T-cell (primary cell): ENCODE measurements at regions of chr10 and their contacts with region 1.

Region 1: GRCh38 chr10:5476918-5477525 is 22.3 kb downstream of the CALML5 start:
- DNase-seq: no peak
- ATAC-seq: no peak
- H3K4me3 ChIP-seq: no peak overlapping the region
- H3K4me3 Mint-ChIP-seq: no peak overlapping the region
- H3K27ac ChIP-seq: no peak overlapping the region
- H3K27ac Mint-ChIP-seq: no peak overlapping the region
- H3K4me1 ChIP-seq: no peaks in the 10 kb centered on the region
- H3K4me1 Mint-ChIP-seq: no peaks in the 10 kb centered on the region
- H3K27me3 ChIP-seq: peaks cover 0 to 16% of the 10 kb centered on the region in 2 experiments
- H3K27me3 Mint-ChIP-seq: peaks cover 0 to 4% of the 10 kb centered on the region in 2 donors

Region 2: GRCh38 chr10:5466418-5467154 is 10.4 kb before region 1 on chr10:
- CTCF ChIA-PET with region 1: no interaction called
- POLR2A ChIA-PET with region 1: interaction called in 1 of 2 experiments, 10 read pairs
- DNase-seq: no peak
- ATAC-seq: peak in 2 of 4 experiments; percentile 30 to 42
- H3K4me3 ChIP-seq: no peak overlapping the region
- H3K4me3 Mint-ChIP-seq: no peak overlapping the region
- H3K27ac ChIP-seq: no peak overlapping the region
- H3K27ac Mint-ChIP-seq: no peak overlapping the region
- H3K4me1 ChIP-seq: peaks cover 0 to 2% of the 10 kb centered on the region in 2 experiments
- H3K4me1 Mint-ChIP-seq: peaks cover 0 to 12% (median 3%) of the 10 kb centered on the region in 3 donors
- H3K27me3 ChIP-seq: no peaks in the 10 kb centered on the region
- H3K27me3 Mint-ChIP-seq: peaks cover 0 to 4% of the 10 kb centered on the region in 2 donors

Region 3: DNA sequence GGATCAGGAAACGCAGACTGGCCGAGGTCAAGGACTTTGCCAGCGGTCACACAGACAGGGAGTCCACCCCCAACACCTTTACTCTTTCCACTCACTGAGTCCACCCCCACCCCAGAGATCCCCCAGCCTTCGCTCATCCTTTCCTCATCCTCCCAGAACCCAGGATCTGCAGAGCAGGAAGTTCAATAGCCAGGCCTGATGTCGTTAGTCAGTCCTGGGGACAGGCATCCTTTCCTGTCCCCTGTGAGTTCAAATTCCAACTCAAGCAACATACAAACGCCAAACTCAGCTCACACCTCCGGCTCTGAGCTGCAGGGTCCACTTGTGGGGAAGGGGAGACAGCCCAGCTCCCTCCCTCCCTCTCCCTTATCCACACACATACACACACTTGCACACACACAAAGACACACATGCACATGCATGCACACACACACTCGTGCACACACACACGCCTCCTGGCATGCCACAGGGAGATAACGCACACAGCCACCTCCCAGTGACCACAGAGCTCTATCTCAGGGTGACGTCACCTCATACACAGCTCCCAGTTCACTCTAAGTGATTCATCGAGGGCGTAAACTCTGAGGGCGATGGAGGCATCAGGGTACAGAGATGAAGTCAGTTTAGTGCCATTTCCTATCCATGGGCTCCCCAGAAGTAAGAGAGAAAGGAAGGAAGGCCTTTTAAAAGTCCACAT is 71.7 kb after region 1 on chr10:
- CTCF ChIA-PET with region 1: no interaction called
- POLR2A ChIA-PET with region 1: no interaction called
- DNase-seq: peak in 34 of 35 experiments; percentile 11 to 69 (median 42)
- ATAC-seq: peak; percentile 85 to 96 (median 92)
- H3K4me3 ChIP-seq: no peak overlapping the region
- H3K4me3 Mint-ChIP-seq: no peak overlapping the region
- H3K27ac ChIP-seq: no peak overlapping the region
- H3K27ac Mint-ChIP-seq: no peak overlapping the region
- H3K4me1 ChIP-seq: peaks cover 27 to 46% of the 10 kb centered on the region in 2 experiments
- H3K4me1 Mint-ChIP-seq: peaks cover 28 to 32% (median 32%) of the 10 kb centered on the region in 3 donors
- H3K27me3 ChIP-seq: peaks cover 0 to 7% of the 10 kb centered on the region in 2 experiments
- H3K27me3 Mint-ChIP-seq: no peaks in the 10 kb centered on the region